Activated CD4-positive, alpha-beta T cell treated with anti-CD3 and anti-CD28 coated beads for 36 hours (primary cell): ENCODE measurements at regions of chr20 and their contacts with region 1.

Region 1: DNA sequence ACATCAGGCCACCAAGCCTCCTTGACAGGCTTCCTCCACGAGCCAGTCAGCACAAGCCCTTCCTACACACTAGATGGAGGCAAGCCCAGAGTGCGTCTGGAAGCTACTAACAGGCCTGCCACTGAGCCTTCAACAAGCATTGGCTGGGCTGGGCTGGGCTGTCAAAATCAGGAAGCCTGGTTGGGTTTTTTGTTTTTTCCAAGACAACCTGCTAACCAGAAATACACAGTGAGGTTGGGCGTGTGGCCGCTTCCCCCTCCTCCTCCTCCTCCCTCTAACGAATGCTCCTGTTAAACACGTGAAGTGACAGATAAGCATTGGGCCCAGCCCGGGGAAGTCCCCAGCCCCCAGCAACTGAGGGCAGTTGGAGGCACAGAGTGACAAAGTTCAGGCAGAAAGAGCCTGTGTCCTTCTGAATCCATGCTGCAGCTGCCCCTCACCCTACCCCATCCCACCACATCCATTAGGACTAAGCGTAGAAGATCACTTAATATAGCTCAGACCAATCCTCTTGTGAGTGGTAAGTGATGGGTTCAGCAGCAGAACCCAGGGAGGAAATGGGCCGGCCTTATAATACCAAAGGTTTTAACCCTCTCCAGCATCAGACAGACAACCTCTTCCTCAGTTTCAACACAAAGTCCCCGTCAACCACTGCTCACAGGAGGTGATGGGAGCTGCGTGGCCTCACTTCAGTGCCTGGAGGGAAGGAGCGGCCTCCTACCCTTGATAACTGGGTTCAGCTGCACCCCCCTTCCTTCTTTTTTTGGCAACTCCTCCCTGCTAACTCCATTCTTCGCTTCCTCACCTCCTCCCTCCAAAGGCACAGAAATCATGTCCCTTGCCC is 1.1 kb downstream of the NFATC2 start:
- DNase-seq: peak; percentile 90
- ATAC-seq: peak; percentile 84
- H3K4me3 Mint-ChIP-seq: peak overlapping the region; percentile 97
- H3K27ac Mint-ChIP-seq: peak overlapping the region; percentile 99
- H3K4me1 Mint-ChIP-seq: peaks cover 43% of the 10 kb centered on the region
- H3K27me3 Mint-ChIP-seq: peaks cover 8% of the 10 kb centered on the region

Region 2: GRCh38 chr20:50929299-50930138 is 611.9 kb before region 1 on chr20:
- CTCF ChIA-PET with region 1: no interaction called
- POLR2A ChIA-PET with region 1: no interaction called
- intact Hi-C with region 1: loop called in 1 of 2 experiments (anchors 5 kb)
- DNase-seq: peak; percentile 98
- ATAC-seq: peak; percentile 80
- H3K4me3 Mint-ChIP-seq: peak overlapping the region; percentile 92
- H3K27ac Mint-ChIP-seq: peak overlapping the region; percentile 95
- H3K4me1 Mint-ChIP-seq: peaks cover 55% of the 10 kb centered on the region
- H3K27me3 Mint-ChIP-seq: no peaks in the 10 kb centered on the region

Region 3: DNA sequence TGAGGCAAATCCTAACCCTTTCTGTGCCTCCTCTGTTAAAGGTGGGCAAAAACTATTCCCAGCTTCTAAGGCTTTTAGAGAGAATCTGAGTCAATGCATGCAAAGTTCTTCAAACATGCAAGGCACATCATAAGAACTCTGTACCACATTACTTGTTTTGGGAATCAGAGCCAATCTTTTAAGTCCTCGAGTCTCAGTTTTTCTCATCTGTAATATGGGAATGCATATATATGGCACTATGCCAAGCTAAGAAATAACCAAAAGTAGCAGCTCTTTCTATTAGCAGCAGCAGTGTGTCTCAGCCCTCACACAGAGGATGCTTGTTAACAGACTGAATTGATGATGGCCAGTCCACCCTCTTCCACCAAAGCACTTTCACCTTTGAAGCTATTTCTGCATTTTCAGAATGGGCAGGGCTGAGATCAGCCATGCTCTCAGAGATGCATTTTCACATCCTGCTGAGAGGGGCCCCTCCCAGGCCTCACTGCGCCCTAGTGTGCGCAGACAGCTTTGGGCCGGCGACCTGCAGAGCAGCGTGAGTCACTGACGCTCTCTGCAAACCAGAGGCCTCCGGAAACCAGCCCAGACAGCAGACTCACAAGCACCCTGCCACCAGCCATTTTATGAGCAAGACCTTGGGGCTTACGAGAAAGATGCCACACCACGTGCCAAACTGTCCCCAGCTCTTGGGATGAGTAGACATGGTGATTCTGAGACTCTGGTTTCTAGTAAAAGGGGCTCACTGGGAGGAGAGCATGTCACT is 136.9 kb before region 1 on chr20:
- CTCF ChIA-PET with region 1: interaction called, 4 read pairs
- POLR2A ChIA-PET with region 1: interaction called, 3 read pairs
- intact Hi-C with region 1: loop called in 1 of 2 experiments (anchors 1 kb)
- DNase-seq: peak; percentile 94
- ATAC-seq: peak; percentile 81
- H3K4me3 Mint-ChIP-seq: peak overlapping the region; percentile 1
- H3K27ac Mint-ChIP-seq: peak overlapping the region; percentile 96
- H3K4me1 Mint-ChIP-seq: peaks cover 89% of the 10 kb centered on the region
- H3K27me3 Mint-ChIP-seq: no peaks in the 10 kb centered on the region

Region 4: DNA sequence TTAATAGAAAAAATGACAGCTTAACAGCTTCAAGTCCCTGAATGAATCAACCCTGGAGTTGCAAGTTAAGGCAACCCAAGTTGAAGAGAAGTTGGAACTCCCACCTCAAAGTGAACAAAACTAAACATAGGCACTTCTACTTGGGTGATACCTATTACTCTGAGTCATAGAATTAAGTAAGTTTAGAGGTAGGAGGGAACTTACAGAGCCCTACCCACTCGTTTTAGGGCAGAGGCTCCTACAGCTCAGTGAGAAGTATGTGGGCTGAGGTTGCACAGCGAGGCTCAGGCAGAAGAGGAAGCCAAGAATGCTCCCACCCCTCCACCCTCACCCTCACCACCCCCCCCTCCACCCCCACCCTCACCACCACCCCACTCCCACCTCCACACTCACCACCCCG is 41.1 kb before region 1 on chr20:
- CTCF ChIA-PET with region 1: interaction called, 9 read pairs
- POLR2A ChIA-PET with region 1: interaction called, 5 read pairs
- intact Hi-C with region 1: loop called (anchors 1 kb)
- DNase-seq: peak; percentile 74
- ATAC-seq: peak; percentile 72
- H3K4me3 Mint-ChIP-seq: no peak overlapping the region
- H3K27ac Mint-ChIP-seq: peak overlapping the region; percentile 91
- H3K4me1 Mint-ChIP-seq: peaks cover 82% of the 10 kb centered on the region
- H3K27me3 Mint-ChIP-seq: no peaks in the 10 kb centered on the region

Region 5: GRCh38 chr20:51517839-51518238 is 23.6 kb before region 1 on chr20:
- CTCF ChIA-PET with region 1: no interaction called
- POLR2A ChIA-PET with region 1: no interaction called
- intact Hi-C with region 1: no loop called
- DNase-seq: no peak
- ATAC-seq: no peak
- H3K4me3 Mint-ChIP-seq: no peak overlapping the region
- H3K27ac Mint-ChIP-seq: no peak overlapping the region
- H3K4me1 Mint-ChIP-seq: peaks cover 68% of the 10 kb centered on the region
- H3K27me3 Mint-ChIP-seq: no peaks in the 10 kb centered on the region

Region 6: GRCh38 chr20:51569827-51570738 is 28.7 kb after region 1 on chr20:
- CTCF ChIA-PET with region 1: interaction called, 3 read pairs
- POLR2A ChIA-PET with region 1: no interaction called
- intact Hi-C with region 1: loop called in 1 of 2 experiments (anchors 1 kb)
- DNase-seq: no peak
- ATAC-seq: no peak
- H3K4me3 Mint-ChIP-seq: no peak overlapping the region
- H3K27ac Mint-ChIP-seq: no peak overlapping the region
- H3K4me1 Mint-ChIP-seq: peaks cover 16% of the 10 kb centered on the region
- H3K27me3 Mint-ChIP-seq: peaks cover 8% of the 10 kb centered on the region